ENCODE measurements at regions of chr18 and their contacts with region 1.

Region 1: DNA sequence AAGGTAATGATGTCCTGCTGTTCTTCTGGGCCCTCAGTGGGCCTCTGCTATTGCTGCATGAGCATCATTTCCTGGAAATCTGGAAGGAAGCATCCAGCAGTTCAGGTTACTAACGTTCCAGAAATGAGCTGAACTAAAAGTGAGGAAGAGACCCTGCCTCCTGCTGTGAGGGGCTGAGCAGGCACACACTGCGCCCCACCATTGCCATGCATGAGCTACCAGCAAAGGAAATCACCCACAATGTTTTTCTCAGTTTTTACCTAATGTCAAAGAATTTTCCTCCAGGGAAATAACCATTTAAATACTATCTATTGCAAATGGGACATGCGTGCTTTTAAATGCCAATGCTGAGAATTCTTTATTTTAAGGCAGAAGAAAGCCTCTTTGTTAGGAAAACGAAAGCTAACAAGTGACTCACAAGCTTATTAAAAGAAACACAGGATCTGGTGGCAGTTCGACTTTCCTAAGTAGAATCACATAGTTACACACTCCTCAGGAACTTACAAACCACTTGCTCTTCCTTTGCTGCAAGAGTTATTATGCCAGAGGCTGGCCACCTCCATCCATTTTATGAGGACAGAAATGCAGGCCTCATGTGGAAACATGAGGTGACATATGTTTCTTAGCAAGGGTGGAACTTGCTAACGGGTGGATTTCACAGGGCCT is 152.6 kb upstream of the TTC39C start:
- DNase-seq: peak in 1 of 2 experiments; percentile 78
- H3K4me3 ChIP-seq: no peak overlapping the region
- H3K27ac ChIP-seq: peak overlapping the region; percentile 70
- H3K4me1 ChIP-seq: peaks cover 22% of the 10 kb centered on the region
- H3K27me3 ChIP-seq: no peaks in the 10 kb centered on the region
- CTCF ChIP-seq: no peak

Region 2: GRCh38 chr18:24089076-24089475 is 227.1 kb after region 1 on chr18:
- CTCF ChIA-PET with region 1: no interaction called
- POLR2A ChIA-PET with region 1: interaction called, 11 read pairs
- intact Hi-C with region 1: no loop called
- DNase-seq: no peak
- H3K4me3 ChIP-seq: no peak overlapping the region
- H3K27ac ChIP-seq: no peak overlapping the region
- H3K4me1 ChIP-seq: no peaks in the 10 kb centered on the region
- H3K27me3 ChIP-seq: no peaks in the 10 kb centered on the region
- CTCF ChIP-seq: no peak

Region 3: GRCh38 chr18:25180973-25181548 is 1319.1 kb after region 1 on chr18:
- CTCF ChIA-PET with region 1: no interaction called
- POLR2A ChIA-PET with region 1: no interaction called
- intact Hi-C with region 1: no loop called
- DNase-seq: no peak
- H3K4me3 ChIP-seq: no peak overlapping the region
- H3K27ac ChIP-seq: no peak overlapping the region
- H3K4me1 ChIP-seq: no peaks in the 10 kb centered on the region
- H3K27me3 ChIP-seq: peaks cover 6% of the 10 kb centered on the region; the same call in 1 of the 2 replicates
- CTCF ChIP-seq: no peak

Measured in PC-9 (cell line).